Heart right ventricle (tissue), 16 donors: ENCODE measurements at regions of chr15 and their contacts with region 1.

Region 1: GRCh38 chr15:92930776-92931175 is 30.7 kb downstream of the CHD2 start:
- DNase-seq: no peak
- ATAC-seq: peak in 5 of 8 donors; percentile 13 to 51 (median 32)
- H3K4me3 ChIP-seq: no peak overlapping the region
- H3K27ac ChIP-seq: peak overlapping the region in 2 of 10 donors; percentile 26 to 47
- H3K4me1 ChIP-seq: peaks cover 0 to 31% (median 10%) of the 10 kb centered on the region in 9 donors
- H3K27me3 ChIP-seq: no peaks in the 10 kb centered on the region
- CTCF ChIP-seq: no peak

Region 2: GRCh38 chr15:92820236-92821021 is 110.3 kb before region 1 on chr15:
- intact Hi-C with region 1: no loop called
- DNase-seq: peak; percentile 93
- ATAC-seq: peak; percentile 95 to 99 (median 98)
- H3K4me3 ChIP-seq: peak overlapping the region in 9 of 10 donors; percentile 25 to 57 (median 52)
- H3K27ac ChIP-seq: peak overlapping the region; percentile 43 to 91 (median 86)
- H3K4me1 ChIP-seq: peaks cover 0 to 32% (median 13%) of the 10 kb centered on the region in 9 donors
- H3K27me3 ChIP-seq: no peaks in the 10 kb centered on the region
- CTCF ChIP-seq: no peak

Region 3: GRCh38 chr15:92989470-92989869 is 58.7 kb after region 1 on chr15:
- intact Hi-C with region 1: loop called in 1 of 10 experiments (anchors 10 kb)
- DNase-seq: no peak
- ATAC-seq: peak in 2 of 8 donors; percentile 13 to 33
- H3K4me3 ChIP-seq: no peak overlapping the region
- H3K27ac ChIP-seq: no peak overlapping the region
- H3K4me1 ChIP-seq: peaks cover 0 to 11% (median 0%) of the 10 kb centered on the region in 9 donors
- H3K27me3 ChIP-seq: no peaks in the 10 kb centered on the region
- CTCF ChIP-seq: no peak